WTC11 (cell line): ENCODE measurements at regions of chr7 and their contacts with region 1.

Region 1: DNA sequence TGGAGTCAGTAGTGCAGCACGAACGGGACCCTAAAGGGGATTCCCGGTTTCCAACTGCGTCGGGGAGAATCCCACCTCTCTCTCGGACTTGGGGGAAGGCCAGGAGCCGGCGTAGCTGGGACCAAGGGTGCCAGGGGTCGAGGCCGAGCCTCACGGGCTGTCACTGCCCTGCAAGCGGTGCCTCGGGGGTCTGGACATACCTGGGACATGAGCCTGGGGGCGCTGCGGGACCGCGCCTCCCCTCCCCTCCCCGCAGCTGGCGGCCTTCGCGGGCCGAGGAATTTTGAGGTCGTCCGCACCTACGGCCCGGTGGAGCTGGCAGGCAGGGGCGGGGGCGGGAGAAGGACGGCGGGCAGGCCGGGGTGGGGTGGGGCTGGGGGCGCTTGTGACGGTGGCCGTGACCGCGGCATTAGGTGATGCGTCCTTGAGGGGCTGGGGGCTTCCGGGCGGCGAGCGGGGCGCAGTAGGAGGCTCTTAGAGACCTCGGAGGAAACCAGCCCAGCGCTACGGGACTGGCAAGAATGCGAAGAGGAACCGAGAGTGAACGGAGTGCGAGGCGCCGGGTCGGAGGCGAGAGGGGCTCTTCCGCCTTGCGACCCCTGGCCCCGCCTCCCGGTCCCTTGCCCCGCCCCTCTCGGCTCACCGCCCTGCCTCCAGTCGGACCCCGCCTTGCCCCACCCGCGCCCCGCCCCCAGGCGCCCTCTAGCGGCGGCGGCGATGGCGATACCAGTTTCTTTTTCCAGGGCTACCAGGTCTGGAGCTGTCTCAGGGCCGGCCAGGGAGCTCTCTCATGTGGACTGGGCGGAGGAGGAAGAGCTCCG is 48.3 kb downstream of the NPVF start:
- DNase-seq: peak; percentile 99
- ATAC-seq: peak; percentile 96
- H3K4me3 Mint-ChIP-seq: peak overlapping the region; percentile 80
- H3K27ac Mint-ChIP-seq: no peak overlapping the region
- H3K4me1 Mint-ChIP-seq: peaks cover 24% of the 10 kb centered on the region
- H3K27me3 Mint-ChIP-seq: peaks cover 20% of the 10 kb centered on the region
- CTCF ChIP-seq: peak; percentile 80

Region 2: GRCh38 chr7:25139536-25139935 is 40.4 kb before region 1 on chr7:
- CTCF ChIA-PET with region 1: interaction called, 11 read pairs
- POLR2A ChIA-PET with region 1: no interaction called
- DNase-seq: no peak
- ATAC-seq: no peak
- H3K4me3 Mint-ChIP-seq: no peak overlapping the region
- H3K27ac Mint-ChIP-seq: no peak overlapping the region
- H3K4me1 Mint-ChIP-seq: peaks cover 20% of the 10 kb centered on the region
- H3K27me3 Mint-ChIP-seq: no peaks in the 10 kb centered on the region
- CTCF ChIP-seq: no peak

Region 3: GRCh38 chr7:25216837-25217236 is 36.9 kb after region 1 on chr7:
- CTCF ChIA-PET with region 1: interaction called, 45 read pairs
- POLR2A ChIA-PET with region 1: no interaction called
- DNase-seq: no peak
- ATAC-seq: no peak
- H3K4me3 Mint-ChIP-seq: no peak overlapping the region
- H3K27ac Mint-ChIP-seq: no peak overlapping the region
- H3K4me1 Mint-ChIP-seq: peaks cover 4% of the 10 kb centered on the region
- H3K27me3 Mint-ChIP-seq: no peaks in the 10 kb centered on the region
- CTCF ChIP-seq: peak; percentile 71

Region 4: GRCh38 chr7:25259587-25260243 is 79.7 kb after region 1 on chr7:
- CTCF ChIA-PET with region 1: interaction called, 11 read pairs
- POLR2A ChIA-PET with region 1: no interaction called
- DNase-seq: peak; percentile 69
- ATAC-seq: peak; percentile 95
- H3K4me3 Mint-ChIP-seq: no peak overlapping the region
- H3K27ac Mint-ChIP-seq: no peak overlapping the region
- H3K4me1 Mint-ChIP-seq: peaks cover 9% of the 10 kb centered on the region
- H3K27me3 Mint-ChIP-seq: no peaks in the 10 kb centered on the region; the same call in 1 of the 2 replicates
- CTCF ChIP-seq: peak; percentile 53

Region 5: GRCh38 chr7:25359471-25360059 is 179.6 kb after region 1 on chr7:
- CTCF ChIA-PET with region 1: no interaction called
- POLR2A ChIA-PET with region 1: no interaction called
- DNase-seq: no peak
- ATAC-seq: no peak
- H3K4me3 Mint-ChIP-seq: no peak overlapping the region
- H3K27ac Mint-ChIP-seq: no peak overlapping the region
- H3K4me1 Mint-ChIP-seq: peaks cover 8% of the 10 kb centered on the region
- H3K27me3 Mint-ChIP-seq: no peaks in the 10 kb centered on the region; the same call in 1 of the 2 replicates
- CTCF ChIP-seq: no peak